Endothelial cell of umbilical vein (primary cell): ENCODE measurements at regions of chrX and their contacts with region 1.

Region 1: GRCh38 chrX:53563324-53563723 is 123.2 kb downstream of the HUWE1 start:
- DNase-seq: no peak
- H3K4me3 ChIP-seq: no peak overlapping the region
- H3K27ac ChIP-seq: no peak overlapping the region
- H3K4me1 ChIP-seq: no peaks in the 10 kb centered on the region
- H3K27me3 ChIP-seq: no peaks in the 10 kb centered on the region
- CTCF ChIP-seq: no peak
- POLR2A ChIP-seq: no peak

Region 2: GRCh38 chrX:53357799-53358530 is 205.4 kb before region 1 on chrX:
- CTCF ChIA-PET with region 1: no interaction called
- POLR2A ChIA-PET with region 1: no interaction called
- dilution Hi-C with region 1: no loop called
- intact Hi-C with region 1: no loop called
- DNase-seq: no peak
- H3K4me3 ChIP-seq: no peak overlapping the region
- H3K27ac ChIP-seq: no peak overlapping the region
- H3K4me1 ChIP-seq: no peaks in the 10 kb centered on the region
- H3K27me3 ChIP-seq: no peaks in the 10 kb centered on the region
- CTCF ChIP-seq: no peak
- POLR2A ChIP-seq: no peak

Region 3: DNA sequence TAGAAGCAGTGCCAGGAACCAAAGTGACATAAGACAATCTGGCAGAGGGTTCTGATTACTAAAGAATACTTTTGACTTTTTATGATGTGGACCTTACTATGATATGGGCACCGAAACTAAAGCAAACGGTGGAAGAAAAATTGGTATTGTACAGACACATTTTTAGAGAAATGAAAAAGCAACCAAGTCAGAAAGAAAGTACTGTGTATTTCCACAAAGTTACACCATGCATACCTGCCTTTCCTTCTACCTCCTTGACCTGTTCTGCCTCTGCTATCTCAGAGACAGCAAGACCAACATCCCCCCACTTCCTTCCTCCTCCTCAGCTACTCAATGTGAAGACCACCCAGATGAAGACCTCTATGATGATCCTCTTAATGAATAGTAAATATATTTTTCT is 34.8 kb after region 1 on chrX:
- CTCF ChIA-PET with region 1: no interaction called
- POLR2A ChIA-PET with region 1: no interaction called
- dilution Hi-C with region 1: no loop called
- intact Hi-C with region 1: loop called (anchors 1 kb)
- DNase-seq: peak; percentile 5
- H3K4me3 ChIP-seq: no peak overlapping the region
- H3K27ac ChIP-seq: peak overlapping the region; percentile 23
- H3K4me1 ChIP-seq: peaks cover 50% of the 10 kb centered on the region
- H3K27me3 ChIP-seq: no peaks in the 10 kb centered on the region
- CTCF ChIP-seq: no peak
- POLR2A ChIP-seq: no peak

Region 4: DNA sequence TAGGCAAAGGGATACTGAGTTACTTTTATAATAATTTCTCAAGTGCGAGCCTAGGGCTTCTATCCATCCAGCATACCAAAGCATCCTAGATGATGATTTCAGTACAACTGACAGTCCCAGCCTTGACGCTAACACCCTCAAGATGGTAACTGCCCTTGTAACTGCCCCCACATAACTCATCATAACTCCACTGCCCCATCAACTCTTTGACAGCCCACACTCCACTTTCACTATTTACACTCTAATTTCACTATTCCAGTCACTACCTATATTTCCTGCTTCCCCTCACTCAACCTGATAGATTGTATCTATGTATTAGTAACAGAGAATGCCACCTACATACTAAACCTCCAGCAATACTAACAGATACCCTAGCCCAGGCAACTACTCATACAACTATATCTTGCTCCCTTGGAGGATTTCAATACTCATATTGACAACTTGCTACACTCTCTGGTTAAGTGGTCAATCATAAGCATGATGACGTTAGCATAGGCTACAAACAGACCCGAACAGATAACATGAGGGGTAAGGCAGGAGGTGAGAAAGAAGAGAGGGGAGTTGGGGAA is 58.2 kb after region 1 on chrX:
- CTCF ChIA-PET with region 1: interaction called, 3 read pairs
- POLR2A ChIA-PET with region 1: no interaction called
- dilution Hi-C with region 1: loop called (anchors 10 kb)
- intact Hi-C with region 1: no loop called
- DNase-seq: no peak
- H3K4me3 ChIP-seq: no peak overlapping the region
- H3K27ac ChIP-seq: no peak overlapping the region
- H3K4me1 ChIP-seq: peaks cover 3% of the 10 kb centered on the region
- H3K27me3 ChIP-seq: no peaks in the 10 kb centered on the region
- CTCF ChIP-seq: no peak
- POLR2A ChIP-seq: no peak